ENCODE measurements at regions of chr5 and their contacts with region 1.

Region 1: GRCh38 chr5:151002250-151002649 is 18.1 kb upstream of the GPX3 start:
- DNase-seq: peak in 1 of 2 experiments; percentile 44
- H3K4me3 ChIP-seq: no peak overlapping the region
- H3K4me3 Mint-ChIP-seq: no peak overlapping the region
- H3K27ac Mint-ChIP-seq: no peak overlapping the region
- H3K4me1 ChIP-seq: peaks cover 10% of the 10 kb centered on the region
- H3K4me1 Mint-ChIP-seq: peaks cover 14% of the 10 kb centered on the region
- H3K27me3 ChIP-seq: no peaks in the 10 kb centered on the region
- H3K27me3 Mint-ChIP-seq: no peaks in the 10 kb centered on the region
- CTCF ChIP-seq: peak; percentile 45 to 56

Region 2: DNA sequence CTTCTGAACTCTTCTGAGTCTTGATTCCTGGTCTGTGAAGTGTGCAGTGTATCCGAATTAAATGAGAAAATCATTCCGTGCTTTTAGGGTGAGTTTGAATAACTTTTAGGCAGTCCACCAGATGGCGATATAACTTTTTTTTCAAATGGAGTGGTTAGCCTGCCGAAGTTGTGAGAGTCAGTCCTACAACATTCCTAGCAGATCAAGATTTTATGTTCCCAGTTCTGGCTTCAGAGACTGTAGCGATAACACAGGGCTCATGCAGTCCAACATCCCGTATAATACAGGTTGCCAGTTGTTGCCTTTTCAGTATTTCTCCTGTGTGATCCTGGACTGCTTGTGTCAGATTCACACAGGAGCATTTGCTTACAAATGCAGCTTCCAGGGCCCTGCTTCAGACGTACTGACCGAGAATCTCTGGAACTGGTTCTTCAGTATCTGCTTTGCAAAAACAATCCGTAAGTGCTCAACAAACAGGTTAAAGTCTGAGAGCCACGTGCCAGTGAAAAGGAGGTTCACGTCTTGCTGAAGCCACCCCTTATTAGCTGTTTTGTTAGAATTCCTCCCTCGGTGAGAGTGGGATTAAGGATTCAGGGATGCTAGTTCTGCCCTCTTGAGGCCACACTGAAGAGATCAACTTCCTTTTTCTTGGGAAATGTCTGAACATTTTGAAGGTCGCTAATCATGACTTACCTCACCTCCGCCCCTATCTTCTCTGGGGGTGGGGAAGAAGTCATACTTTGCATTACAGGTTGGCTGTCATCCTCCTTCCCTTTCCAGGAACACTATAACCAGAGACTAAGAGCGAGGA is 200.9 kb before region 1 on chr5:
- CTCF ChIA-PET with region 1: no interaction called
- POLR2A ChIA-PET with region 1: no interaction called
- intact Hi-C with region 1: loop called (anchors 5 kb)
- DNase-seq: peak in 1 of 2 experiments; percentile 76
- H3K4me3 ChIP-seq: peak overlapping the region; percentile 28
- H3K4me3 Mint-ChIP-seq: peak overlapping the region; percentile 76
- H3K27ac Mint-ChIP-seq: peak overlapping the region; percentile 69
- H3K4me1 ChIP-seq: 0 out of 2 replicates have a peak, but pooled peaks cover 6% of the 10 kb centered on the region
- H3K4me1 Mint-ChIP-seq: peaks cover 6% of the 10 kb centered on the region
- H3K27me3 ChIP-seq: no peaks in the 10 kb centered on the region
- H3K27me3 Mint-ChIP-seq: no peaks in the 10 kb centered on the region
- CTCF ChIP-seq: peak; percentile 61

Region 3: DNA sequence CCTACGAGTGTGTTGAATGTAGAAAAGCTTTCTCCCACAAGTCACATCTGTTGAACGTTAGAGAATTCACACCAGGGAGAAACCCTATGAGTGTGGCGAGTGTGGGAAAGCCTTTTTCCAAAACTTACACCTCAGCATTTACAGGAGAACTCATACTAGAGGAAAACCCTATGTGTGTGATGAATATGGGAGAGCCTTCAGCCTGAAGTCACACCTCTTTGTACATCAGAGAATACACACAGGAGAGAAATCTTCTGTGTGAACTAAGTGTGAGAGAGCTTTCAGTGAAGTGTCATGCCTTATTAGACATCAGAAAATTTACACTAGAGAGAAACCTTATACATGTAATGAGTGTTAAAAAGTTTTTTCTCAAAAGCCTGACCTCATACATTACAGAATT is 23.7 kb before region 1 on chr5:
- CTCF ChIA-PET with region 1: no interaction called
- POLR2A ChIA-PET with region 1: no interaction called
- intact Hi-C with region 1: no loop called
- DNase-seq: no peak
- H3K4me3 ChIP-seq: no peak overlapping the region
- H3K4me3 Mint-ChIP-seq: no peak overlapping the region
- H3K27ac Mint-ChIP-seq: no peak overlapping the region
- H3K4me1 ChIP-seq: no peaks in the 10 kb centered on the region
- H3K4me1 Mint-ChIP-seq: no peaks in the 10 kb centered on the region
- H3K27me3 ChIP-seq: no peaks in the 10 kb centered on the region
- H3K27me3 Mint-ChIP-seq: no peaks in the 10 kb centered on the region
- CTCF ChIP-seq: no peak

Region 4: GRCh38 chr5:151040211-151040747 is 38.0 kb after region 1 on chr5:
- CTCF ChIA-PET with region 1: interaction called, 4 read pairs
- POLR2A ChIA-PET with region 1: no interaction called
- intact Hi-C with region 1: loop called (anchors 1 kb)
- DNase-seq: peak; percentile 58 to 80
- H3K4me3 ChIP-seq: no peak overlapping the region
- H3K4me3 Mint-ChIP-seq: no peak overlapping the region
- H3K27ac Mint-ChIP-seq: peak overlapping the region; percentile 75
- H3K4me1 ChIP-seq: peaks cover 11% of the 10 kb centered on the region
- H3K4me1 Mint-ChIP-seq: peaks cover 7% of the 10 kb centered on the region
- H3K27me3 ChIP-seq: no peaks in the 10 kb centered on the region
- H3K27me3 Mint-ChIP-seq: no peaks in the 10 kb centered on the region
- CTCF ChIP-seq: peak in 1 of 2 experiments; percentile 28

Region 5: GRCh38 chr5:151115274-151115905 is 113.1 kb after region 1 on chr5:
- CTCF ChIA-PET with region 1: interaction called, 25 read pairs
- POLR2A ChIA-PET with region 1: no interaction called
- intact Hi-C with region 1: loop called (anchors 1 kb)
- DNase-seq: peak; percentile 74 to 83
- H3K4me3 ChIP-seq: no peak overlapping the region
- H3K4me3 Mint-ChIP-seq: no peak overlapping the region
- H3K27ac Mint-ChIP-seq: no peak overlapping the region
- H3K4me1 ChIP-seq: no peaks in the 10 kb centered on the region
- H3K4me1 Mint-ChIP-seq: peaks cover 7% of the 10 kb centered on the region
- H3K27me3 ChIP-seq: no peaks in the 10 kb centered on the region
- H3K27me3 Mint-ChIP-seq: no peaks in the 10 kb centered on the region
- CTCF ChIP-seq: peak; percentile 93 to 94

Region 6: GRCh38 chr5:151157426-151158286 is 155.4 kb after region 1 on chr5 and contains the start of gene ANXA6:
- CTCF ChIA-PET with region 1: no interaction called
- POLR2A ChIA-PET with region 1: no interaction called
- intact Hi-C with region 1: no loop called
- DNase-seq: peak; percentile 76 to 83
- H3K4me3 ChIP-seq: peak within 1 kb of the TSS; percentile 60
- H3K4me3 Mint-ChIP-seq: peak within 1 kb of the TSS; percentile 74
- H3K27ac Mint-ChIP-seq: peak within 1 kb of the TSS; percentile 69
- H3K4me1 ChIP-seq: peaks cover 36% of the 10 kb centered on the region
- H3K4me1 Mint-ChIP-seq: peaks cover 10% of the 10 kb centered on the region
- H3K27me3 ChIP-seq: no peaks in the 10 kb centered on the region
- H3K27me3 Mint-ChIP-seq: no peaks in the 10 kb centered on the region
- CTCF ChIP-seq: no peak
- total RNA-seq, gene ANXA6: 43.0 and 51.9 TPM in 2 replicates

Region 7: GRCh38 chr5:151315998-151316597 is 313.8 kb after region 1 on chr5:
- CTCF ChIA-PET with region 1: interaction called, 5 read pairs
- POLR2A ChIA-PET with region 1: no interaction called
- intact Hi-C with region 1: loop called (anchors 10 kb)
- DNase-seq: peak; percentile 74 to 81
- H3K4me3 ChIP-seq: no peak overlapping the region
- H3K4me3 Mint-ChIP-seq: no peak overlapping the region
- H3K27ac Mint-ChIP-seq: no peak overlapping the region
- H3K4me1 ChIP-seq: peaks cover 8% of the 10 kb centered on the region; the same call in 1 of the 2 replicates
- H3K4me1 Mint-ChIP-seq: peaks cover 13% of the 10 kb centered on the region
- H3K27me3 ChIP-seq: no peaks in the 10 kb centered on the region
- H3K27me3 Mint-ChIP-seq: no peaks in the 10 kb centered on the region
- CTCF ChIP-seq: peak; percentile 89 to 92